OCI-LY7 (cell line): ENCODE measurements at regions of chr4 and their contacts with region 1.

Region 1: DNA sequence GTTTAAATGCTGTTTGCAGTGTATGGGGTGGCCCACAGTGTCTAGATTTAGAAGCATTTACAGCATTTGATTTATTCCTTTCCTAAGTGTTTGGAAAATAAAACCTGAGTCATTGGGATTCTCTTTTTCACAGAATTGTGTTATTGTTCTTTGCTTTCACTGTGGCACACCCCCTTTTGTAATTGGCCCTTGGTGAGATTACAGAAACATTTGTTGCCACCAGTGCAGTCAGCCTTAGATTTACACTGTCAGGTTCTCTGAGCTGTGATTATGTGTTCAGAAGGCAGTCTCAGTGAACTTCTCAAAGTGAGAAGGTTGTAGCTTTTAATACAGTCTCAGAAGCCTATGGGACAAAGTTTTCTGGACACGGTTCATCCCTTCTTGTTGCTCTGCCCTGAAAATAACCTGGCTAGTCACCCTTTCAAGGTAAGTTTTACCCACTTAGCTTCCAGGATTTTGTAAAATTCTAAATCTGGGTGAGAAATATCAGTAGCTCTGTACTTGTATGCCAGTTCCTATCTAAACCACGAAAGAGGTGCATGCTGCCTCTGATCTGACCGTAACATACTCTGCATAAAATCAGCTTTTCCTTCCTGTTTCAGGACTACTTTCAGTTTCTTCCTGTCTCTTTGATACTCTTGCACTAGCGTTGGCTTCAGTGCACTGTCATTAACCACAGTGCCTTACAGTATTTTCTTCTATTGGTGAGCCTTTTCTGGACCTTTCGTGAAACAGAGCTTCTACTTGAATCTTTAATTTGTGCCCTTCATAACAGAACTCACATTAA is 12.6 kb downstream of the RUFY3 start:
- DNase-seq: peak; percentile 87
- H3K4me3 ChIP-seq: peak overlapping the region; percentile 63
- H3K27ac ChIP-seq: peak overlapping the region; percentile 75
- H3K4me1 ChIP-seq: peaks cover 53% of the 10 kb centered on the region
- CTCF ChIP-seq: no peak

Region 2: DNA sequence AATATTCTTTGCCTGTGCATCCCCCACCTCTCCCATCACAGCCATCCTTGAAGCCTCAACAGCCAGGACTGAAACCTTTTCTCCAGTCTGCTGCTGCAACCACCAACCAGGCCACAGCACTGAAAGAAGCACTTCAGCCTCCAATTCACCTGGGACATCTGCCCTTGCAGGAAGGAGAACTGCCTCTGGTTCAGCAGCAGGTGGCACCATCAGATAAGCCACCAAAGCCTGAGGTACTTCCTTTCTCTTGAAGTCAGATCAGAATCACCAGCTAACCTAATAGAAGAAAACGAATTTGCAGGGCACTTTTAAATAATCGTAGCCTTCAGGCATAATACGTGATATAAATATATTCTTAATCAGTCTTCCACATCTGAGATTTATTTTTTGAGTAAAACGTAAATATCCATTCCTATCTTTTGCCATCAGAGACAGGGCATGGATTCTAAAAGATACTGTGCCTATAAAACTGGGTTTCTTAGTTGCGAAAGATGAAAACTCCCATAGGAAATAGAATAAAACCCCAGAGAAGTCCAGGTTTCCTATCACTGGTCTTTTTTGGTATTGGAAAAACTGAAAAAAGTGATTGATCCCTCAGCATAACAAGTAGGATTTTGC is 132.8 kb before region 1 on chr4:
- CTCF ChIA-PET with region 1: no interaction called
- POLR2A ChIA-PET with region 1: interaction called, 7 read pairs
- intact Hi-C with region 1: loop called (anchors 1 kb)
- DNase-seq: peak; percentile 90
- H3K4me3 ChIP-seq: no peak overlapping the region
- H3K27ac ChIP-seq: no peak overlapping the region
- H3K4me1 ChIP-seq: peaks cover 7% of the 10 kb centered on the region
- CTCF ChIP-seq: peak; percentile 99

Region 3: DNA sequence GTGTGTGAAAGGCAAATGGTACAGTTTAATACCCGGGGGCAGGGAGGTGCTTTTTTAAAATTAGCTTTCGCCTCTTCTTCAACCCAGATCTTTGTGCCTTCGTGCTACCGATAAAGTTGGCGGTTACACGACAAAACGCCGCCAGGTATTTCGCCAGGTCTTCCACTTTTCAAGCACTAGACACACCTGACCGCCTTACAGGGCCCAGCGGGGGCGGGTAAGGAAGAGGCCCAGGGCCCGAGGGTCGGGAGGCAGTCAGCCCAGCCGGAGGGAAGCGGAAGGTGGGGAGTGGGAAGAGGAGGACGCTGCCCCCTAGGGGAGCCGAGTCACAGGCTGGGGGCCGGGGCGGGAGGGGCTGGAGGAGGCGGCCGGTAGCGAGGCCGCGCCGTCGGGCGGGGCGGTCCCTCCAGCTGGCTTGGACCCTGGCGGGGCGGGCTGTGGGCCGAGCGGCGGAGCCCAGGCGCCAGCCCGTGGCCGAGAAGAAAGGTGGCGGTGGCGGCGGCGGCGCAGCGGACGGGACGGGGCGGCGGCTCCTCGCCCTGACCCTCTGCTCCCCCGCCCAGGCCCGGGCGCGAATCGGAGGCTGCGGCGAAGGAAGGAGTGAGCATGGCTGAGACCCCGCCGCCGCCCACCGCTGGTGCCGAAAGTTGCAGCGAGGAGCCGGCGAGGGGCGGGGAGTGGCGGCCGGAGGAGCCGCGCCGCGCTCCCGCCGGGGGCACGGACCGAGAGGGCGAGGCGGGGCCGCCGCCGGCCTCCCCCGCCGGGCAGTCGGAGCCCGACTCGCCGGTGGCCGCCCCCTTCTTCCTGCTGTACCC is 29.8 kb before region 1 on chr4:
- CTCF ChIA-PET with region 1: interaction called, 18 read pairs
- POLR2A ChIA-PET with region 1: interaction called, 42 read pairs
- intact Hi-C with region 1: loop called (anchors 2 kb)
- DNase-seq: peak; percentile 85
- H3K4me3 ChIP-seq: peak overlapping the region; percentile 90
- H3K27ac ChIP-seq: peak overlapping the region; percentile 77
- H3K4me1 ChIP-seq: peaks cover 32% of the 10 kb centered on the region
- CTCF ChIP-seq: peak; percentile 71

Region 4: GRCh38 chr4:70721747-70722146 is 12.6 kb before region 1 on chr4 and contains the start of gene RUFY3:
- CTCF ChIA-PET with region 1: interaction called, 4 read pairs
- POLR2A ChIA-PET with region 1: interaction called, 44 read pairs
- intact Hi-C with region 1: no loop called
- DNase-seq: no peak
- H3K4me3 ChIP-seq: no peak within 1 kb of the TSS
- H3K27ac ChIP-seq: no peak within 1 kb of the TSS
- H3K4me1 ChIP-seq: no peaks in the 10 kb centered on the region
- CTCF ChIP-seq: no peak
- total RNA-seq, gene RUFY3: 36.4 and 38.2 TPM in 2 replicates

Region 5: DNA sequence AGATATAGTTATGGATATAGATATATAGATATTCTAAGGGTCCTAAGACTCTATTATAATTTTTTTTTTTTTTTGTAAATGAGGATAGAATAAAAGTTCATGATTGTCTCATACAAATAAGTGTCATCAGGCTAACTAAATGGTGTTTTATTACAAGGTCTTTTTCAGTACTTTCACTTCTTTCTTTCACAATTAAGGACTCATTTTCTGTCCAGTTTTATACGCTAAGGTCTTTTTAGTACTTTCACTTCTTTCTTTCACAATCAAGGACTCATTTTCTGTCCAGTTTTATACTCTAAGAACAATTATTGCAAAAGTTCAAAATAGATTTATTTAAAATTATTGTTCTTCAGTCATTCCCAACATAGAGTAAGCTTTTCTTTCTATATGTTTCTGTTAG is 20.1 kb after region 1 on chr4:
- CTCF ChIA-PET with region 1: interaction called, 8 read pairs
- POLR2A ChIA-PET with region 1: interaction called, 38 read pairs
- intact Hi-C with region 1: loop called (anchors 2 kb)
- DNase-seq: peak; percentile 70
- H3K4me3 ChIP-seq: peak overlapping the region; percentile 60
- H3K27ac ChIP-seq: peak overlapping the region; percentile 91
- H3K4me1 ChIP-seq: peaks cover 74% of the 10 kb centered on the region
- CTCF ChIP-seq: no peak

Region 6: DNA sequence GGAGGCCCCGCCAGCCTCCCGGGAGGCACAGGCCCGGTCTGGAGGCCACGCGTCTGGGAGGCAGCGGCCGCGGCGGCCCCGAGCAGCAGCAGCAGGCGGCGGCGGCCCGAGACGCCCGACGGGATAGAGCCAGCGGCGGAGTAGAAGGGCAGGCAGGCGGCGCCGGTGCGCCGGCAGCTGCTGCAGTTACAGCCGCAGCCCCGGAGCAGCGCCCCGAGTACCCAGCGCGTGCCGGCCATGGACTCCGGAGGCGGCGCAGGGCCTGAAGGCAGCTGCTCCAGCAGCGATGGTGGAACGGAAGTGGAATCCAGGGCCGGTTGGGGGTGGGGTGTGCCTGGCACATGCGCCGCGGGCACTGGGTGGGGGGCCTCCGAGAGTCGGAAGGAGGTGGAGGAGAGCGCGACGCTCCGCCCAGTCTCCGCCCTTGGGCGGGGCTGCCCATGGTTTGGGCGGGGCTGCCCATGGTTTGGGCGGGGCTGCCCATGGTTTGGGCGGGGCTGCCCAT is 105.3 kb after region 1 on chr4 and contains the start of gene GRSF1:
- CTCF ChIA-PET with region 1: no interaction called
- POLR2A ChIA-PET with region 1: interaction called, 13 read pairs
- intact Hi-C with region 1: loop called (anchors 2 kb)
- DNase-seq: peak; percentile 97
- H3K4me3 ChIP-seq: peak within 1 kb of the TSS; percentile 73
- H3K27ac ChIP-seq: peak within 1 kb of the TSS; percentile 76
- H3K4me1 ChIP-seq: peaks cover 41% of the 10 kb centered on the region
- CTCF ChIP-seq: peak; percentile 21; the same call in 1 of the 2 replicates
- total RNA-seq, gene GRSF1: 32.8 and 36.7 TPM in 2 replicates